ENCODE measurements at regions of chr2 and their contacts with region 1.

Region 1: GRCh38 chr2:112187805-112188596 is 49.8 kb downstream of the FBLN7 start:
- DNase-seq: peak; percentile 90
- ATAC-seq: peak; percentile 86
- H3K4me3 Mint-ChIP-seq: peak overlapping the region; percentile 62
- H3K27ac Mint-ChIP-seq: peak overlapping the region; percentile 96
- H3K4me1 Mint-ChIP-seq: peaks cover 90% of the 10 kb centered on the region
- H3K27me3 Mint-ChIP-seq: no peaks in the 10 kb centered on the region

Region 2: GRCh38 chr2:112242384-112242783 is 54.4 kb after region 1 on chr2:
- CTCF ChIA-PET with region 1: interaction called, 6 read pairs
- POLR2A ChIA-PET with region 1: no interaction called
- intact Hi-C with region 1: loop called in 1 of 2 experiments (anchors 1 kb)
- DNase-seq: no peak
- ATAC-seq: peak; percentile 20
- H3K4me3 Mint-ChIP-seq: no peak overlapping the region
- H3K27ac Mint-ChIP-seq: peak overlapping the region; percentile 39
- H3K4me1 Mint-ChIP-seq: peaks cover 40% of the 10 kb centered on the region
- H3K27me3 Mint-ChIP-seq: no peaks in the 10 kb centered on the region

Region 3: GRCh38 chr2:112275306-112275886 is 87.4 kb after region 1 on chr2 and contains the start of gene ZC3H6:
- CTCF ChIA-PET with region 1: no interaction called
- POLR2A ChIA-PET with region 1: no interaction called
- intact Hi-C with region 1: loop called in 1 of 2 experiments (anchors 1 kb)
- DNase-seq: peak; percentile 100
- ATAC-seq: peak; percentile 98
- H3K4me3 Mint-ChIP-seq: peak within 1 kb of the TSS; percentile 90
- H3K27ac Mint-ChIP-seq: peak within 1 kb of the TSS; percentile 97
- H3K4me1 Mint-ChIP-seq: peaks cover 26% of the 10 kb centered on the region
- H3K27me3 Mint-ChIP-seq: no peaks in the 10 kb centered on the region
- total RNA-seq, gene ZC3H6: 15.1 to 15.3 TPM

Region 4: DNA sequence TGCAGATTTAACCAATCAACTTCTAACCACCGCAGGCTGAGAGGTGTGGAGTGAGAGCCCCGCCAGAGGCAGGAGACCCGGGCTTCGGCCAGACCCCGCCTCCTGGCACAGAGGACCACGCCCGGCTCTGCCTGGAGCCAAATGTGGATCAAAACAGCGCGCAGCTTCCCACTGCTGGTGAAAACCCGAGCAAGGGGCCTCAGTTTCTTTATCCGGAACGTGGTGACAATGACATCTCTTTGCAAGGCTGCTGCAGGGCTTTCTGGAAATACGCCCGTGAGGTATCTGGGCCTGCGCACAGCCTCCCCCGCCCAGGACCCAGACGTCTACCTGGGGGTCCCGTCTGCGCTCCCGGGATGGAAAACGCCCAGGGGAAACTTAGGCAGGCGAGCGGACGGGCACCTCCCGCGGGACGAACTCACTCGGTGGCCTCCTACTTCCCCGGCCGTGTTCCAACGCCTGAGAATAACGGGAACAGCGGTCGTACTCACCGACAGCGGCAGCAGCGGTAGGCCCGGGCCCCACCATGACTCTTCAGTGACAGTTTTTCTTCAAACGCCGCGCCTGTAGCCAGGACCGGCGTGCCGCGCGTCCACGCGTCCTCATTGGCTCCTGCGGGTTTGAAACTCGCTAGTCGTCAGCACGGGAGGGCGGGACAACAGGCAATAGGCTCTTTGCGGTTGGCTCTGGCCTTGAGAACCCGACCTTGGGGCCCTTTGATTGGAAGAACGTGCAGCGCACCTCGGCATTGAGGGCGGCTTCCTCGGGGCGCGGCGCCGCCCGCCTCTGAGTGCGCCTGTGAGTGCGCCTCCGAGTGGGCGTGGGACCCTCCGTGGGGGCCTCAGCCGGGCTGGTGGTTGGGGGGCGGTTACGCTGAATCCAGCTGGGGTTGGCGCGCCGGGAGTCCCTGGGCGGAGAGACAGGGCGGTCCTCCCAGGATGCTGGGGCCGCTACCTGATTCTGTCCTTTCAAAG is 576.4 kb after region 1 on chr2 and contains the start of gene CKAP2L:
- CTCF ChIA-PET with region 1: no interaction called
- POLR2A ChIA-PET with region 1: no interaction called
- intact Hi-C with region 1: loop called in 1 of 2 experiments (anchors 10 kb)
- DNase-seq: peak; percentile 98
- ATAC-seq: peak; percentile 97
- H3K4me3 Mint-ChIP-seq: peak within 1 kb of the TSS; percentile 96
- H3K27ac Mint-ChIP-seq: peak within 1 kb of the TSS; percentile 95
- H3K4me1 Mint-ChIP-seq: peaks cover 25% of the 10 kb centered on the region
- H3K27me3 Mint-ChIP-seq: no peaks in the 10 kb centered on the region
- total RNA-seq, gene CKAP2L: 38.4 to 46.7 TPM

Measured in activated CD4-positive, alpha-beta T cell treated with anti-CD3 and anti-CD28 coated beads for 36 hours (primary cell).